ENCODE measurements at regions of chr14 and their contacts with region 1.

Region 1: DNA sequence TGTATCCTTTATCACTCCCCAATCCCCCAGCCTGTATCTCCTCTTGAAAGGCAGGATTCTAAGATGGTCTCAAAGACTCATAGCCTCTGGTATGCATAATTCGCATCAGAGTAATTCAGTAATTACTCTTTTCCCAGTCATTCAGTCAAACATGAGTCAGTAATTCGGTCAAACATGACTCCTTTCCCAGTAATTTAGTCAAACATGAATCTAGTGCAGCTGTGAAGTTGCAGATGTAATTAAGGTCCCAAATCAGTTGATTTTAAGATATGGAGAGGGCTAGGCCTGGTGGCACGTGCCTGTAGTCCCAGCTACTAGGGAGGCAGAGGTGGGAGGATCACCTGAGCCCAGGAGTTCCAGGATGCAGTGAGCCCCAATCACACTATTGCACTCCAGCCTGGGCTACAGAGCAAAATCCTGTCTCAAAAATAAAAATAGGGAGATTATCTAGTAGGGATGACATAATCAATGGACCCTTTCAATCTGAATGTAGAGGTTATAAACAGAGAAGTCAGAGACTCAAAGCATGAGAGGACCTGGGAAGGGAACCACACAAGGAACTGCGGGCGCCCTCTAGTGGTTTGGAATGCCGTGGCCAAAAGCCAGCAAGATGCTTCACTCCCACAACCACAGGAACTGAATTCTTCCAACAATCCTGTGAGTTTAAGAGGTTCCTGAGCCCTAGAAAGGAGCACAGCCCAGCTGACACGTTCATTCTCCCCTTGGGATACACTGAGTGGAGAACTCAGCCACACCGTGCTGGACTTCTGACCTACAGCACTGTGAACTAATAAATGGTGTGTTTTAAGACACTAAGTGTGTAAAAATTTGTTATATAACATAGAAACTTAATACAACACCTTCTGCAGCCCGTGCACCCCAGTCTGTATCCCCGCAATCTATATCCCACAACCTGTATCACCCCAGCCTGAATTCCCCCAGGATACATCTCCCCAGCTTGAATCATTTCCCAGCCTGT is 14.3 kb upstream of the ARMH4 start:
- DNase-seq: peak; percentile 53
- ATAC-seq: peak; percentile 31
- H3K4me3 Mint-ChIP-seq: no peak overlapping the region
- H3K27ac Mint-ChIP-seq: no peak overlapping the region
- H3K4me1 Mint-ChIP-seq: no peaks in the 10 kb centered on the region
- H3K27me3 Mint-ChIP-seq: peaks cover 7% of the 10 kb centered on the region
- CTCF ChIP-seq: no peak

Region 2: DNA sequence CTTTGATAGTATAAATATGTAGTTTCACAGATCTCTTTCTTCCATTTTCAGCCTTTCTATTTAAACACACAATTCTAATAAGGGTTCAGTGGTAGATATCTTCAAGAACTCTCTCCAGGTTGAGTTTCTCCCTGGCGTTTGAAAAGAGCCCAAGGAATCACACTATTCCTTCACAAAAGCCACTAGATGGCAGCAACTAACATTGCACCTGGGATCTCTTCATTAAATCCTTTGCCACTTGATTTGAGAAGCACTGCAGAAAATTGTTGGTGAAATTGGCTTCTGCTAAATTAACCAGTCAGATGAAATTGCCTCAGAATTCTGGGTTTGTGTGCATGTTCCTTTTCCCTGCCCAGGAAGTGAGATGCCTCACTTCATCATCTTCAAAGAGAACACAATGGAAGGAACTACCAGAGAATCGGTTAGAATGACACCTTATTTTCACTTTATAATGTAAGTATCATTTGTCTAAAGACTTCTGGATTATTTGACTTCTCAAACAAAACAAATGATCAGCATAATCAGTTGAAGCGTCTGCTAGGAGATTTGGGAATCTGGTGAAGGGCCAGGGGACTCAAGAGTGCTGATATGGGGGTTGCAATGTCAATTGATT is 679.4 kb before region 1 on chr14:
- CTCF ChIA-PET with region 1: no interaction called
- POLR2A ChIA-PET with region 1: no interaction called
- intact Hi-C with region 1: loop called (anchors 2 kb)
- DNase-seq: no peak
- ATAC-seq: no peak
- H3K4me3 Mint-ChIP-seq: no peak overlapping the region
- H3K27ac Mint-ChIP-seq: no peak overlapping the region
- H3K4me1 Mint-ChIP-seq: no peaks in the 10 kb centered on the region
- H3K27me3 Mint-ChIP-seq: peaks cover 17% of the 10 kb centered on the region
- CTCF ChIP-seq: no peak

Region 3: DNA sequence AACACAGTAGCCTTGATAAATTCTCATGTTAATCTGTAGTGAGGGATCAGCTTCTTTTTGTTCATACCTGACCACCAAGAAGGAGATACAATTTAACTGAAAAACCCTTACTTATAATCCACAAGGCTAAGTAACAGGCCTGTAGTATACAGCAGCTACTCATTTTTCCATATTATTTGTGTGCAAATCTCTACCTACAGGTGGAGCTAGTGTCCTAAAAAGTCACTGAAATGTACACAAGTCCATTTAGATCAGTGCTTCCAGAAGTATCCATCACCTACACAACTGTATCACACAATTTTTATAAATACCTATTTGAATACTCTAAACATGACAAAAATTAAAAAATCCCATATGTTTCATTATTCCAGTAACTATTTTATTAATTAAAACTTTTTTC is 473.6 kb before region 1 on chr14:
- CTCF ChIA-PET with region 1: no interaction called
- POLR2A ChIA-PET with region 1: no interaction called
- intact Hi-C with region 1: loop called (anchors 5 kb)
- DNase-seq: no peak
- ATAC-seq: no peak
- H3K4me3 Mint-ChIP-seq: no peak overlapping the region
- H3K27ac Mint-ChIP-seq: no peak overlapping the region
- H3K4me1 Mint-ChIP-seq: no peaks in the 10 kb centered on the region
- H3K27me3 Mint-ChIP-seq: no peaks in the 10 kb centered on the region
- CTCF ChIP-seq: no peak

Region 4: DNA sequence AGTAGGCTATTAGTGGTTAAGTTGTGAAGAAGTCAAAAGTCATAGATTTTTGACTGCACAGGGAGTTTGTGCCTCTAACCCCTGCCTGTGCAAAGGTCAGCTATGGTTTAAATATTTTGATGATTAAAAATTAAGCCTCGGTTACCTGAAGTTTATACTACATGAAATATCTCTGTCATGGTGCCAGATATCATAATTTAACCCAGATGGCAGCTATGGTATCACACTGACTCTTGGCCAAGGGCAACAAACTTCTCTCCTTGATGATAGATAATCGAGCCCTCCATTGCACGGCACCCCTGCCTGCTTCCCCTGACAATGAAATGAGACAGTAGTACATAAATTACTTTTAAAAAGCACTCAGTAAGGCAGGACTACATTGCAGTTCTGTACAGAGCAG is 381.2 kb before region 1 on chr14:
- CTCF ChIA-PET with region 1: no interaction called
- POLR2A ChIA-PET with region 1: no interaction called
- intact Hi-C with region 1: no loop called
- DNase-seq: no peak
- ATAC-seq: no peak
- H3K4me3 Mint-ChIP-seq: no peak overlapping the region
- H3K27ac Mint-ChIP-seq: no peak overlapping the region
- H3K4me1 Mint-ChIP-seq: no peaks in the 10 kb centered on the region
- H3K27me3 Mint-ChIP-seq: no peaks in the 10 kb centered on the region
- CTCF ChIP-seq: no peak

Region 5: DNA sequence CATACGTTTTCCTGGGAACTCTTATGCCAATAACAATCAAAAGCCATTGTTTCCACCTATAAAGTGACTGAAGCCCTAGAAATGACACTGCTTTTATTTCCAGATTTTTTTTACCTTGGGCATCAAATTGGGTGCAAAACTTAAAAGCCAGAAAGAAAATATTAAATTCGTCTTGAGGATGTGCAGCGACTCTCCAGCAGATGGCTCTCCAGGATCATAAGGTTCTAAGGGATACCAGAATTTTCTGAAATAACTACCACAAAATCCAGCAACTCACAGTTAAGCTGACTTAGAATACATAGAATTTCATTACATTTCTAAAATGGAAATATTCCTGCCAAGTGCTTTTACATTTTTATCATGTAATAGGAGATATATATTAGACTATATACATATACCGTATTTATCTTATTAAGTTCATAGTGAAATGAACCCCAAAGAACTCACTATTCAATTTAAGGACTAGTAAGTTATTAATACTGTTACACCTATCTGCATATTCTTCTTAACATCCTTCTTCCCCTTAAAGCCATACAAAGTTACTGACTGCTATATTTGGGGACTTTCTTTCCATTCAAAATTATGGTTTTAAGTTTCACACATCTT is 58.2 kb before region 1 on chr14:
- CTCF ChIA-PET with region 1: no interaction called
- POLR2A ChIA-PET with region 1: no interaction called
- intact Hi-C with region 1: loop called (anchors 1 kb)
- DNase-seq: no peak
- ATAC-seq: no peak
- H3K4me3 Mint-ChIP-seq: no peak overlapping the region
- H3K27ac Mint-ChIP-seq: no peak overlapping the region
- H3K4me1 Mint-ChIP-seq: no peaks in the 10 kb centered on the region
- H3K27me3 Mint-ChIP-seq: peaks cover 4% of the 10 kb centered on the region
- CTCF ChIP-seq: no peak

Region 6: GRCh38 chr14:58152014-58152857 is 14.1 kb before region 1 on chr14 and contains the start of gene ARMH4:
- CTCF ChIA-PET with region 1: no interaction called
- POLR2A ChIA-PET with region 1: no interaction called
- intact Hi-C with region 1: no loop called
- DNase-seq: peak; percentile 60
- ATAC-seq: peak; percentile 99
- H3K4me3 Mint-ChIP-seq: peak within 1 kb of the TSS; percentile 79
- H3K27ac Mint-ChIP-seq: no peak within 1 kb of the TSS
- H3K4me1 Mint-ChIP-seq: peaks cover 14% of the 10 kb centered on the region
- H3K27me3 Mint-ChIP-seq: peaks cover 40% of the 10 kb centered on the region
- CTCF ChIP-seq: no peak
- total RNA-seq, gene ARMH4: not detected in 2 replicates

Region 7: DNA sequence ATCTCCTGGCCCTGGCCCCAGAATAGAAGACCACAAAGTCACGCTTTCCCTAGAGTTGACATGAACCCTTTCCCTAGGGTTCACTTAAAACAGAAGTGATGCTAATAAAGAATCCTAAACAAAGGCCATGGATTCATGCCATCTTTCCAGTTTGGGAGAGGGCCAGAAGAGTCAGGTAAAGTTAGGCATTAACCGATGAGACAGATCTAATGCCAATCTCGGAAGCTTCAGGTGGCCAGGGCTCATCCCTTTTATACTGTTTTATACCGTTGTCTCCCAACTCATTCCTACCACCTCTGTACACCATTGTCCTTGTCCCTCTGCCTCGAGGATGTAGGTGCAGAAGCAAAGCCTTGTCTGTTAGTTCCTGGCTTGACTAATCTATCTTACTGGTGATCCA is 10.8 kb after region 1 on chr14:
- CTCF ChIA-PET with region 1: no interaction called
- POLR2A ChIA-PET with region 1: no interaction called
- intact Hi-C with region 1: no loop called
- DNase-seq: no peak
- ATAC-seq: no peak
- H3K4me3 Mint-ChIP-seq: no peak overlapping the region
- H3K27ac Mint-ChIP-seq: no peak overlapping the region
- H3K4me1 Mint-ChIP-seq: no peaks in the 10 kb centered on the region
- H3K27me3 Mint-ChIP-seq: peaks cover 18% of the 10 kb centered on the region
- CTCF ChIP-seq: no peak

Region 8: DNA sequence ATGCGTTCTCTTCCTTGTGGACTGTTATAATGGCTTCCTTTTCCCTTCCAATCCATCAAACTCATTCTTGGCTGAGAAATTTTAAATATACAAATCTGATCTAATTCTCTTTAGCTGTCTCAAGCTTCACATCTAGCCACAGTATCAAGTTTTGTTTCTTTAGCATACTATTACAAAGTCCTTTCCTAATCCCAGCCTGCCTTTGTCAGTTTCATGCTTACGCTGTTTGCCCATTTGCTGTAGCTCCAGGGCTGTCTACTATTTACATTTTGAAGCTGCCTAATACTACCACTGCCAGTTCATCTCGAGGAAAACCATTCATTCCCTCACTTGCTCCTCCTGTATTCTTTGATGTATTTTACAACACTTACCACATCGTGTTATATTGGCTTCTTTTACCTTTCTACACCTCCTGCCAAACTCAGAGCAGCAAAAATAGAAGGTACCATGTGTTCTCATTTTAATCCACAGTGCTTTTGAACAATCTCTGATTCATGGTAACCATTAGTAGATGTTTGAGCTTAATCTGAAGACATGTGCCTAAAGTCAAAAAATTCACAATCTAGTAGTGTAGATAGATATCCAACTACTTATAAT is 175.0 kb after region 1 on chr14:
- CTCF ChIA-PET with region 1: no interaction called
- POLR2A ChIA-PET with region 1: no interaction called
- intact Hi-C with region 1: no loop called
- DNase-seq: no peak
- ATAC-seq: no peak
- H3K4me3 Mint-ChIP-seq: no peak overlapping the region
- H3K27ac Mint-ChIP-seq: no peak overlapping the region
- H3K4me1 Mint-ChIP-seq: peaks cover 4% of the 10 kb centered on the region
- H3K27me3 Mint-ChIP-seq: no peaks in the 10 kb centered on the region
- CTCF ChIP-seq: no peak

Measured in activated B cell treated with CpG ODN at 0.5 μM for 24 hours (primary cell).